Endothelial cell of umbilical vein (primary cell): ENCODE measurements at regions of chr3 and their contacts with region 1.

Region 1: DNA sequence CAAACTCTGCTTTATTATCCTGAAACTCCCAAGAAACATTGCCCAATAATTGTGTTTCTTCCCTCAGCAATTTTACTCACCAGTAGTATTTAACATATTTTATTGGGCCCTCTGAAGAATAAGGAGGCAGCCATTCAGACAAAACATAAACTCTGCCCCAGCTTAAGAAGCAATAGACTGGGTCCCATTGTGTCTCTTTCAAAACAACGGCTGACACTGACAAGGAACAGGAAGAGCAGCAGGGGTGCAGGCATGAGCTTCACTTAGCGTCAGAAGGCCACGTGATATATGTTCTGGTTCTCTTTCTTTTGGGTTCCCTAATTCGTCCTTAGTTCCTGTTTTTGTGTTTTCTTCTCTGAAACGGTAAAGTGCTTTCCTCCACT is 242.3 kb downstream of the FHIT start:
- DNase-seq: no peak
- H3K4me3 ChIP-seq: no peak overlapping the region
- H3K27ac ChIP-seq: no peak overlapping the region
- H3K4me1 ChIP-seq: no peaks in the 10 kb centered on the region
- H3K27me3 ChIP-seq: no peaks in the 10 kb centered on the region
- CTCF ChIP-seq: no peak
- POLR2A ChIP-seq: no peak

Region 2: GRCh38 chr3:60417592-60417991 is 591.4 kb before region 1 on chr3:
- CTCF ChIA-PET with region 1: no interaction called
- POLR2A ChIA-PET with region 1: no interaction called
- dilution Hi-C with region 1: no loop called
- intact Hi-C with region 1: loop called (anchors 5 kb)
- DNase-seq: no peak
- H3K4me3 ChIP-seq: no peak overlapping the region
- H3K27ac ChIP-seq: no peak overlapping the region
- H3K4me1 ChIP-seq: no peaks in the 10 kb centered on the region
- H3K27me3 ChIP-seq: no peaks in the 10 kb centered on the region
- CTCF ChIP-seq: no peak
- POLR2A ChIP-seq: no peak

Region 3: GRCh38 chr3:60555684-60556354 is 453.2 kb before region 1 on chr3:
- CTCF ChIA-PET with region 1: no interaction called
- POLR2A ChIA-PET with region 1: no interaction called
- dilution Hi-C with region 1: no loop called
- intact Hi-C with region 1: no loop called
- DNase-seq: no peak
- H3K4me3 ChIP-seq: no peak overlapping the region
- H3K27ac ChIP-seq: no peak overlapping the region
- H3K4me1 ChIP-seq: no peaks in the 10 kb centered on the region
- H3K27me3 ChIP-seq: no peaks in the 10 kb centered on the region
- CTCF ChIP-seq: no peak
- POLR2A ChIP-seq: no peak

Region 4: GRCh38 chr3:60920519-60920918 is 88.5 kb before region 1 on chr3:
- CTCF ChIA-PET with region 1: no interaction called
- POLR2A ChIA-PET with region 1: no interaction called
- dilution Hi-C with region 1: no loop called
- intact Hi-C with region 1: no loop called
- DNase-seq: no peak
- H3K4me3 ChIP-seq: no peak overlapping the region
- H3K27ac ChIP-seq: no peak overlapping the region
- H3K4me1 ChIP-seq: no peaks in the 10 kb centered on the region
- H3K27me3 ChIP-seq: no peaks in the 10 kb centered on the region
- CTCF ChIP-seq: no peak
- POLR2A ChIP-seq: no peak